GM12878 (cell line): ENCODE measurements at regions of chr17 and their contacts with region 1.

Region 1: DNA sequence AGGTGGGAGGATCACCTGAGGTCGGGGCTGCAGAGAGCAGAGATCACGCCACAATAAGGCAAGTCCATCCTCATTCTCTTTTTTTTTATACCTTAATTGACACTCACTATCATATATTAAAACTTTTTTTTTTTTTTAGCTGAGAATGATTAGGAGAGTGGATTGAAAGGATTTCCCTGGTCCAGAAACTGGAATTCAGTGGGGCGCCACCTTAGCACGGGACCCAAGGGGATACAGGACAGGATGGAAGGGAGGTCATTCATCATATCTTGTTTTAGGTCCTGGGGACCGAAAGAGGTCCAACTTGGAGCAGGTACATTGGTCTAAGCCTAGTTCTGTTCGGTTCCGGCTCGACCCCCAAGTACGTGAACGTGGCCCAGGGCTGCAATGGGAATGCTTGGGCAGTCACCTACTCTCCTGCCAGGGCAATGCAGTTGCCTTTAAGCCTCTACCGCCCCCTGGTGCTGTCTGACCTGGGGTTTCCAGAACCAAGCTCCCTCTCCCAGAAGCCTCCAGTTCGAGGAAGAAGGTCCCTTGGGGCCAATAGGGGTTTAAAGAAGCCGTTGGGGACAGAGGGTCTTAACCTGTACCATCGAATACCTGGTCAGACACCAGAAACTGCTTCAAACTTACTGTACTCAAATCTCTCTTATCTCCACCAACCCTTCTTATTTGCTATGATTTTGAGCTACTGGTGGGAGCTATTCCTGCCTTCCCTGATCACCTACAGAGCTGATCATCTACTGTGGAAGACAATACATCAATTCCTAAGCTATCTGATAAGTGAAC is 19.9 kb upstream of the GPATCH8 start:
- DNase-seq: peak; percentile 46
- ATAC-seq: peak; percentile 99
- H3K4me3 ChIP-seq: no peak overlapping the region
- H3K27ac ChIP-seq: no peak overlapping the region
- H3K4me1 ChIP-seq: no peaks in the 10 kb centered on the region; the same call in 1 of the 2 replicates
- H3K27me3 ChIP-seq: no peaks in the 10 kb centered on the region
- CTCF ChIP-seq: peak; percentile 71 to 81 (median 77)
- EP300 ChIP-seq: no peak
- POLR2A ChIP-seq: no peak
- RAD21 ChIP-seq: peak; percentile 80

Region 2: DNA sequence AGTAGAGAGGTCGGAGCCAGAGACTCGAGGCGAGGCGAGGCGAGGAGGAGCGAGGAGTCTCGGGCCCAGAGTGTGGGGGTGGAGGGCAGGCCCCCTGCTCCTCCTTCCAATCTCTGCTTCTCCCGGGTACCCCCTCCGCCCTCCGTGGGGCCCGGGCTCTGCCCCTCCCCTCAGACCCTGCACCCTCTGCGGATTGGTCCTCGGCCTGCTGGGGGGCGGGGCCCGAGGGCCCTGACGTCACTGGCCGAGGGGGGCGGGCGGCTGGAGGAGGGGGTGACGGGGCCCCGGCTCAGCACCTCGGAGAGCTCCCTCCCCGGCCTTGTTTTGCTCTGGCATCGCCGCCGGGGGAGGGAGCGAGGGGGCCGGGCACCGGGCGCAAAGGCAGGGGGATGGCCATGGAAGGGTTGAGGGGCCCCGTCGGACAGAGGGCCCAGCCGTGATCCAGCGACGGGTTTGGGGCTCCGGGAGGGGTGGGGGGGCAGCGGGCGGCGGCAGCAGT is 214.7 kb before region 1 on chr17 and contains the start of gene RUNDC3A:
- CTCF ChIA-PET with region 1: no interaction called
- POLR2A ChIA-PET with region 1: no interaction called
- RAD21 ChIA-PET with region 1: no interaction called
- SMC1A ChIA-PET with region 1: no interaction called
- in situ Hi-C with region 1: no loop called
- intact Hi-C with region 1: no loop called
- DNase-seq: no peak
- ATAC-seq: peak; percentile 92
- H3K4me3 ChIP-seq: peak within 1 kb of the TSS; percentile 50; the same call in 1 of the 2 replicates
- H3K27ac ChIP-seq: no peak within 1 kb of the TSS
- H3K4me1 ChIP-seq: no peaks in the 10 kb centered on the region; the same call in 1 of the 2 replicates
- H3K27me3 ChIP-seq: peaks cover 6 to 10% of the 10 kb centered on the region in 2 experiments
- CTCF ChIP-seq: no peak
- EP300 ChIP-seq: no peak
- POLR2A ChIP-seq: no peak
- RAD21 ChIP-seq: no peak
- polyA plus RNA-seq, gene RUNDC3A: not detected

Region 3: GRCh38 chr17:44331249-44331760 is 191.8 kb before region 1 on chr17:
- CTCF ChIA-PET with region 1: interaction called, 11 read pairs
- POLR2A ChIA-PET with region 1: no interaction called
- RAD21 ChIA-PET with region 1: interaction called, 5 read pairs
- SMC1A ChIA-PET with region 1: interaction called, 3 read pairs
- in situ Hi-C with region 1: no loop called
- intact Hi-C with region 1: no loop called
- DNase-seq: no peak
- ATAC-seq: peak; percentile 72
- H3K4me3 ChIP-seq: no peak overlapping the region
- H3K27ac ChIP-seq: no peak overlapping the region
- H3K4me1 ChIP-seq: peaks cover 14% of the 10 kb centered on the region
- H3K27me3 ChIP-seq: no peaks in the 10 kb centered on the region
- CTCF ChIP-seq: peak; percentile 69 to 85 (median 84)
- EP300 ChIP-seq: no peak
- POLR2A ChIP-seq: no peak
- RAD21 ChIP-seq: peak; percentile 83

Region 4: GRCh38 chr17:44363613-44364159 is 159.4 kb before region 1 on chr17 and contains the start of gene FAM171A2:
- CTCF ChIA-PET with region 1: interaction called, 11 read pairs
- POLR2A ChIA-PET with region 1: no interaction called
- RAD21 ChIA-PET with region 1: interaction called, 3 read pairs
- SMC1A ChIA-PET with region 1: no interaction called
- in situ Hi-C with region 1: no loop called
- intact Hi-C with region 1: no loop called
- DNase-seq: no peak
- ATAC-seq: peak; percentile 96
- H3K4me3 ChIP-seq: peak within 1 kb of the TSS; percentile 67
- H3K27ac ChIP-seq: no peak within 1 kb of the TSS
- H3K4me1 ChIP-seq: no peaks in the 10 kb centered on the region
- H3K27me3 ChIP-seq: peaks cover 0 to 2% of the 10 kb centered on the region in 2 experiments; a peak in 3 of 4 replicates
- CTCF ChIP-seq: peak; percentile 24 to 66 (median 61); a peak in 5 of 6 replicates
- EP300 ChIP-seq: no peak
- POLR2A ChIP-seq: peak; percentile 30; the same call in 1 of the 2 replicates
- RAD21 ChIP-seq: peak; percentile 25; the same call in 1 of the 2 replicates
- polyA plus RNA-seq, gene FAM171A2: 0.09 TPM in 1 of 2 experiments, not detected in the other

Region 5: GRCh38 chr17:44444735-44445105 is 78.4 kb before region 1 on chr17:
- CTCF ChIA-PET with region 1: interaction called, 9 read pairs
- POLR2A ChIA-PET with region 1: no interaction called
- RAD21 ChIA-PET with region 1: interaction called, 10 read pairs
- SMC1A ChIA-PET with region 1: interaction called, 3 read pairs
- in situ Hi-C with region 1: no loop called
- intact Hi-C with region 1: no loop called
- DNase-seq: no peak
- ATAC-seq: no peak
- H3K4me3 ChIP-seq: no peak overlapping the region
- H3K27ac ChIP-seq: no peak overlapping the region
- H3K4me1 ChIP-seq: no peaks in the 10 kb centered on the region
- H3K27me3 ChIP-seq: no peaks in the 10 kb centered on the region
- CTCF ChIP-seq: no peak
- EP300 ChIP-seq: no peak
- POLR2A ChIP-seq: no peak
- RAD21 ChIP-seq: no peak

Region 6: GRCh38 chr17:44533533-44534246 is 10.6 kb after region 1 on chr17:
- CTCF ChIA-PET with region 1: interaction called, 20 read pairs
- POLR2A ChIA-PET with region 1: no interaction called
- RAD21 ChIA-PET with region 1: interaction called, 5 read pairs
- SMC1A ChIA-PET with region 1: interaction called, 10 read pairs
- in situ Hi-C with region 1: no loop called
- intact Hi-C with region 1: no loop called
- DNase-seq: no peak
- ATAC-seq: peak; percentile 99
- H3K4me3 ChIP-seq: no peak overlapping the region
- H3K27ac ChIP-seq: no peak overlapping the region
- H3K4me1 ChIP-seq: peaks cover 10% of the 10 kb centered on the region
- H3K27me3 ChIP-seq: no peaks in the 10 kb centered on the region
- CTCF ChIP-seq: peak; percentile 93 to 98 (median 95)
- EP300 ChIP-seq: no peak
- POLR2A ChIP-seq: no peak
- RAD21 ChIP-seq: peak; percentile 94

Region 7: GRCh38 chr17:44623070-44623725 is 100.1 kb after region 1 on chr17:
- CTCF ChIA-PET with region 1: no interaction called
- POLR2A ChIA-PET with region 1: no interaction called
- RAD21 ChIA-PET with region 1: no interaction called
- SMC1A ChIA-PET with region 1: no interaction called
- in situ Hi-C with region 1: no loop called
- intact Hi-C with region 1: no loop called
- DNase-seq: no peak
- ATAC-seq: no peak
- H3K4me3 ChIP-seq: no peak overlapping the region
- H3K27ac ChIP-seq: no peak overlapping the region
- H3K4me1 ChIP-seq: peaks cover 4% of the 10 kb centered on the region
- H3K27me3 ChIP-seq: no peaks in the 10 kb centered on the region
- CTCF ChIP-seq: no peak
- EP300 ChIP-seq: no peak
- POLR2A ChIP-seq: no peak
- RAD21 ChIP-seq: no peak